Kidney (tissue), 22 donors: ENCODE measurements at regions of chr22 and their contacts with region 1.

Region 1: DNA sequence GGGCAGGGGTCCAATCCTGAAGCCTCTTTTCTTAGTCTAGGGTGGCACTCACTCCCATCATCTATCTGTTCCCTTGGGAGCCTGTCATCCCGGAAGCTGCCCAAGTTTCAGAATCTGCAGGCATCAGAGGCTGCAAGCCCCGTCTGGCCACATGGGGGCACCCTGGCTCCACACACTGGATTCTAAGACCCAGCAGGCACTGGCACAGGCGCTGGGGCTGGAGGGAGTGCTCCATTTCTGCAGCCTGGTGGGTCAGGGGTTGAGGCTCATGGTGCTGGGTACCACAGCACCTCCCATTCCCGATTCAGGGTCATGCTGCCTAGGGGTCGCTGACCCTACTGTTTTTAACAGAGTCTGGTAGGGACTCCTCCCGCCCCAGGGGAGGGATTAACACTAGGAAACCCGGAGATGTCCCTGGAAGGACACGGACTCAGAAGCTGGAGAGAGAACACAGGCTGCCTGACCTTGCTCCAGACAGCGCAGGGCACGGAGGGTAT is 243.9 kb upstream of the SYN3 start:
- DNase-seq: peak; percentile 86 to 92 (median 89)
- H3K4me3 ChIP-seq: peak overlapping the region in 2 of 3 donors; percentile 44 to 51
- H3K27ac ChIP-seq: no peak overlapping the region
- H3K4me1 ChIP-seq: peaks cover 4 to 16% (median 9%) of the 10 kb centered on the region in 3 donors
- H3K27me3 ChIP-seq: no peaks in the 10 kb centered on the region
- CTCF ChIP-seq: peak; percentile 97

Region 2: DNA sequence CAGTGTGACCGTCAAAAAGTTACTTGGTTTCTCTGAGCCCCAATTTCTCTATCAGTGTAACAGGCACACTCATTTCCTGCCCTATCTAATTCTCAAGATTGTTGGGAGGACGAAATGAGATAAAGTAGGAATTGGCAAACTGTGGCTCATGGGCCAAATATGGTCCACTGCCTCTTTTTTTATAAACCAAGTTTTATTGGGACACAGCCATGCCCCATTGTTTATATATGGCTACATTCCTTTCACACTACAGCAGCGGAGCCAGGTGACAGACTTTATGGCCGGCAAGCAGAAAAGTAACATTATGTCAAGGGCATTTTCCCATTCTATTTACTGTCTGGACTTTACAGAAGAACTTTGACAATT is 617.3 kb before region 1 on chr22:
- intact Hi-C with region 1: no loop called
- DNase-seq: no peak
- H3K4me3 ChIP-seq: no peak overlapping the region
- H3K27ac ChIP-seq: no peak overlapping the region
- H3K4me1 ChIP-seq: no peaks in the 10 kb centered on the region
- H3K27me3 ChIP-seq: no peaks in the 10 kb centered on the region
- CTCF ChIP-seq: no peak

Region 3: GRCh38 chr22:33163815-33164214 is 138.3 kb before region 1 on chr22:
- intact Hi-C with region 1: no loop called
- DNase-seq: peak in 2 of 5 donors; percentile 20 to 32
- H3K4me3 ChIP-seq: no peak overlapping the region
- H3K27ac ChIP-seq: no peak overlapping the region
- H3K4me1 ChIP-seq: no peaks in the 10 kb centered on the region
- H3K27me3 ChIP-seq: no peaks in the 10 kb centered on the region
- CTCF ChIP-seq: no peak

Region 4: GRCh38 chr22:33240888-33241475 is 61.1 kb before region 1 on chr22:
- intact Hi-C with region 1: no loop called
- DNase-seq: no peak
- H3K4me3 ChIP-seq: no peak overlapping the region
- H3K27ac ChIP-seq: no peak overlapping the region
- H3K4me1 ChIP-seq: no peaks in the 10 kb centered on the region
- H3K27me3 ChIP-seq: no peaks in the 10 kb centered on the region
- CTCF ChIP-seq: no peak

Region 5: GRCh38 chr22:33354928-33355327 is 52.8 kb after region 1 on chr22:
- intact Hi-C with region 1: no loop called
- DNase-seq: no peak
- H3K4me3 ChIP-seq: no peak overlapping the region
- H3K27ac ChIP-seq: no peak overlapping the region
- H3K4me1 ChIP-seq: no peaks in the 10 kb centered on the region
- H3K27me3 ChIP-seq: no peaks in the 10 kb centered on the region
- CTCF ChIP-seq: no peak

Region 6: GRCh38 chr22:33920927-33921524 is 618.9 kb after region 1 on chr22:
- intact Hi-C with region 1: loop called (anchors 10 kb)
- DNase-seq: peak; percentile 98 to 99 (median 99)
- H3K4me3 ChIP-seq: peak overlapping the region; percentile 56 to 80 (median 78)
- H3K27ac ChIP-seq: no peak overlapping the region
- H3K4me1 ChIP-seq: peaks cover 5 to 19% (median 6%) of the 10 kb centered on the region in 3 donors
- H3K27me3 ChIP-seq: no peaks in the 10 kb centered on the region
- CTCF ChIP-seq: no peak